ENCODE measurements at regions of chr21 and their contacts with region 1.

Region 1: GRCh38 chr21:34345091-34345871 is 18.5 kb upstream of the KCNE2 start:
- DNase-seq: no peak
- ATAC-seq: no peak
- H3K4me3 Mint-ChIP-seq: no peak overlapping the region
- H3K27ac Mint-ChIP-seq: no peak overlapping the region
- H3K4me1 Mint-ChIP-seq: peaks cover 3% of the 10 kb centered on the region
- H3K27me3 Mint-ChIP-seq: no peaks in the 10 kb centered on the region

Region 2: DNA sequence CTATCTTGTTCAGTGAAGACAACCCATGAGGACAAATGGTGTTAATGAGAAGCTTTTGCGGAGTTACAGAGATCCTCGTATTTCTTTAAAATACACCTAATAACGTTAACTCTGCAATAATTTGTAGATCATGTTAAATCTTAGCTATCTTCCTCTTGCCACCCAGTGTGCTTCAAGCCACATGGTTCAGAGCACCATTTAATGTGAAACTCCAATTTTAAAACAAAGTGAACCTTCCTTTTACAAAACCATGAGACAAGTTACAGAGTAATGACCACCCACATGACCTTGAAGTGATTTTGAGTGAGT is 16.8 kb after region 1 on chr21:
- CTCF ChIA-PET with region 1: interaction called, 50 read pairs
- POLR2A ChIA-PET with region 1: no interaction called
- intact Hi-C with region 1: no loop called
- DNase-seq: no peak
- ATAC-seq: no peak
- H3K4me3 Mint-ChIP-seq: no peak overlapping the region
- H3K27ac Mint-ChIP-seq: no peak overlapping the region
- H3K4me1 Mint-ChIP-seq: peaks cover 6% of the 10 kb centered on the region
- H3K27me3 Mint-ChIP-seq: peaks cover 8% of the 10 kb centered on the region

Measured in activated CD4-positive, alpha-beta T cell treated with anti-CD3 and anti-CD28 coated beads for 36 hours (primary cell).